Heart left ventricle (tissue), 16 donors: ENCODE measurements at regions of chr18 and their contacts with region 1.

Region 1: GRCh38 chr18:25099895-25100294 is 252.1 kb downstream of the ZNF521 start:
- DNase-seq: peak in 1 of 5 donors; percentile 29
- ATAC-seq: peak in 1 of 4 donors; percentile 32
- H3K4me3 ChIP-seq: no peak overlapping the region
- H3K27ac ChIP-seq: no peak overlapping the region
- H3K4me1 ChIP-seq: peaks cover 0 to 36% (median 10%) of the 10 kb centered on the region in 12 donors
- H3K27me3 ChIP-seq: no peaks in the 10 kb centered on the region
- CTCF ChIP-seq: no peak
- POLR2A ChIP-seq: no peak

Region 2: DNA sequence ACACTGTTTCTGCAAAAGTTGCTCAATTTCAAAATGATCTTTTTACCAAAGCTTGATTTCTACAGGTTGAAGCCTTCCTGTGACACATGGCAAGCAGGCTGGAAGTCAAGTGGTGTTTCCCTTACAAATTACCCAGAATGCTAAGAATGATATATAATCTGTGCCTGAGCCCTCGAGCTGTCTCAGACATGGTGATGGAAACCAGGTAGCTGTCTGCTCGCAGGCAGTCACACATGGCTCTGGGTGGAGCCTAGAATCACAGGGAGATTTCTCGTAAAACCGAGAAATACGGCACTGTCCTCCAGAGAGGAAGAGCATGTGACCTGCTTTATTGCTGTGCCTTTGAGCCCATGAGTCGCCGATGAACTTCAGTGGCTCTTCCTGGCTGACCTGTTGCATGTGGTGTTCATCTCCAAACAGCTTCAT is 140.8 kb before region 1 on chr18:
- intact Hi-C with region 1: no loop called
- DNase-seq: no peak
- ATAC-seq: no peak
- H3K4me3 ChIP-seq: no peak overlapping the region
- H3K27ac ChIP-seq: no peak overlapping the region
- H3K4me1 ChIP-seq: peaks cover 0 to 9% (median 0%) of the 10 kb centered on the region in 12 donors
- H3K27me3 ChIP-seq: no peaks in the 10 kb centered on the region
- CTCF ChIP-seq: no peak
- POLR2A ChIP-seq: no peak

Region 3: DNA sequence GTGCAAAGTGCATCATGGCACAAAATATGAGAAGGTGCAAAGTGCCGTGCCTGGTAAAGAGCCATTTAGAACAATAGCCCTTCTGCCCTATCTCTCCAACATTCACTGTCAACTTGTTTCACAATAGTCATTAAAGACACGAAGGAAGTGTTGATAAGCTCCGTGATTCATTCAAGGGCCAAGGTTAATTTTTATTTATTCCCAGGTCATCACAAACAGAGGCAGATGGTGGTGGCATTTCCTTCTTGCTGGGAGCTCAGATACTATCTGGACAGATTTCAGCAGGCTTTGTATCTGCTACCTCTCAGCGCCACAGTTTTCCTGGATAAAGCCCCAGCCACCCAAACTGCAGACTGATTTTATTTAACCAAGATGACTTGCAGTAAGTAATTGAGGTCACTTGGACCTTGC is 57.2 kb before region 1 on chr18:
- intact Hi-C with region 1: no loop called
- DNase-seq: no peak
- ATAC-seq: peak in 2 of 4 donors; percentile 36 to 60
- H3K4me3 ChIP-seq: no peak overlapping the region
- H3K27ac ChIP-seq: no peak overlapping the region
- H3K4me1 ChIP-seq: peaks cover 0 to 10% (median 0%) of the 10 kb centered on the region in 12 donors
- H3K27me3 ChIP-seq: no peaks in the 10 kb centered on the region
- CTCF ChIP-seq: no peak
- POLR2A ChIP-seq: no peak

Region 4: GRCh38 chr18:25164848-25165811 is 65.2 kb after region 1 on chr18:
- intact Hi-C with region 1: loop called in 1 of 10 experiments (anchors 5 kb)
- DNase-seq: peak; percentile 19 to 46 (median 29)
- ATAC-seq: peak; percentile 72 to 82 (median 80)
- H3K4me3 ChIP-seq: peak overlapping the region; percentile 10 to 60 (median 44)
- H3K27ac ChIP-seq: peak overlapping the region in 8 of 12 donors; percentile 17 to 61 (median 44)
- H3K4me1 ChIP-seq: peaks cover 0 to 29% (median 17%) of the 10 kb centered on the region in 12 donors
- H3K27me3 ChIP-seq: no peaks in the 10 kb centered on the region
- CTCF ChIP-seq: peak in 2 of 12 donors; percentile 13 to 16
- POLR2A ChIP-seq: no peak